Left cardiac atrium (tissue), 4 donors: ENCODE measurements at regions of chr13 and their contacts with region 1.

Region 1: GRCh38 chr13:101514788-101515187 is 62.3 kb downstream of the ITGBL1 start:
- DNase-seq: no peak
- ATAC-seq: peak; percentile 44 to 45

Region 2: GRCh38 chr13:100594731-100595130 is 920.1 kb before region 1 on chr13:
- intact Hi-C with region 1: no loop called
- DNase-seq: no peak
- ATAC-seq: no peak

Region 3: GRCh38 chr13:101013245-101013644 is 501.5 kb before region 1 on chr13:
- intact Hi-C with region 1: no loop called
- DNase-seq: no peak
- ATAC-seq: no peak

Region 4: DNA sequence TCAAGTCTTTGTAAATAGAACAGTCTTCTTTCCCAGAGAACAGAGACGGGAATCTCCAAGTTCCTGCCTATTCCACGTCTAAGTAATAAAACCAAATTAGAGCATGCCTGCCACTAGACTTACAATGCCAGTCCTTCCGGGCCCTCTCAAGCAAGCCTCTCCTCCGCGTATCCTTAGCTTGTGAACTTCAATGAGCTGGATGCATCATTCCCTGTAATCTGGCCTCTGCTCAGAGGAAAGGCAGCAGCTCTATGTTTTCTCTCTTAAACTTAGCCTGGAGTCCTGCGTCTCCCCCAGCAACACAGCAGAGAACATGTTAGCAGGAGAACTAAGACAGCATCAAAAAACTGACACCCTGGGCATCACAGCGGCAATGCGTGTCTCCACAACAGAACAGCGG is 106.6 kb before region 1 on chr13:
- intact Hi-C with region 1: no loop called
- DNase-seq: no peak
- ATAC-seq: peak in 1 of 2 donors; percentile 55

Region 5: GRCh38 chr13:101757446-101758039 is 242.8 kb after region 1 on chr13:
- intact Hi-C with region 1: loop called (anchors 5 to 10 kb)
- DNase-seq: no peak
- ATAC-seq: peak; percentile 41 to 51

Region 6: GRCh38 chr13:101811284-101811839 is 296.6 kb after region 1 on chr13:
- intact Hi-C with region 1: no loop called
- DNase-seq: no peak
- ATAC-seq: no peak